IMR-90 (cell line): ENCODE measurements at regions of chr19 and their contacts with region 1.

Region 1: GRCh38 chr19:41439441-41440222 is at the start of gene DMAC2:
- DNase-seq: peak; percentile 97
- ATAC-seq: peak; percentile 99
- H3K4me3 ChIP-seq: peak within 1 kb of the TSS; percentile 82
- H3K27ac ChIP-seq: peak within 1 kb of the TSS; percentile 90
- H3K4me1 ChIP-seq: no peaks in the 10 kb centered on the region; the same call in 1 of the 2 replicates
- H3K27me3 ChIP-seq: no peaks in the 10 kb centered on the region
- CTCF ChIP-seq: peak; percentile 51
- POLR2A ChIP-seq: peak; percentile 76
- RAD21 ChIP-seq: no peak
- total RNA-seq, gene DMAC2: 50.8 and 52.5 TPM in 2 replicates

Region 2: DNA sequence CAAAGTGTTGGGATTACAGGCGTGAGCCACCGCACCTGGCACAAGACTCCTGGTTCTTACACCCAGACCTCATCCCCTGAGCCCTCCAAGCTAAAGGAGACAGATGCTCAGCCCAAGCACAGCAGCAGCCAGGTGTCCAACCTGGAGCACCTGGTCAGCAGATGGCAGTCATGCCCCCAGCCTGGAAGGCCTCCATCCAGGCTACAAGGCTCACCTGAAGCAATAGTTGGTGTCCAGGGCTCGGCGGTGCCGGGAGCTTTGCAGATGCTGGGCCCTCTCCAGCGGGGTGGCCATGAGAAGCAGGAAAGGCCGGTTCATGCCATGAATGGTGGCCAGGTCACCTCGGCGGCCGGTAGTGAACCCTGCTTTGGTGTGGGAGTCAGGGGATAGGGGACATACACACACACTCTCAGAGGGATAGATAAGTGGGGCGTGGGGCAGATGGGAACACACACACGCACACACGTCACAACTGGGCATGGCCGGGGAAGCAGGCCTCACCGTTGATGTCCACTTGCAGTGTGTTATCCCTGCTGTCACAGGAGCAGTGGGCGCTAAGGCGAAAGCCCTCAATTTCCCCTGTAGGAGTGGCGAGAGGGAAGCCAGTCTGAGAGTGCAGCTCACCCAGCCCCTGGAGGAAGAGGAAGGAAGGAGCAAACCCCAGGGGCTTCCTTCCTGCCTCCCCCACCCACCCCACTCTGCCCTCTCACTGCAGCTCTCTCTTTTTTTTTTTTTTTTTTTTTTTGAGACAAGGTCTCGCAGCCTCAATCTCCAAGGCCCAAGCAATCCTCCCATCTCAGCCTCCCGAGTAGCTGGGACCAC is 97.8 kb before region 1 on chr19:
- CTCF ChIA-PET with region 1: no interaction called
- POLR2A ChIA-PET with region 1: no interaction called
- dilution Hi-C with region 1: no loop called
- in situ Hi-C with region 1: no loop called
- intact Hi-C with region 1: no loop called
- DNase-seq: no peak
- ATAC-seq: no peak
- H3K4me3 ChIP-seq: no peak overlapping the region
- H3K27ac ChIP-seq: no peak overlapping the region
- H3K4me1 ChIP-seq: no peaks in the 10 kb centered on the region
- H3K27me3 ChIP-seq: no peaks in the 10 kb centered on the region
- CTCF ChIP-seq: no peak
- POLR2A ChIP-seq: no peak
- RAD21 ChIP-seq: no peak

Region 3: GRCh38 chr19:41570639-41571112 is 131.0 kb after region 1 on chr19:
- CTCF ChIA-PET with region 1: interaction called, 3 read pairs
- POLR2A ChIA-PET with region 1: no interaction called
- dilution Hi-C with region 1: no loop called
- in situ Hi-C with region 1: loop called (anchors 5 kb)
- intact Hi-C with region 1: no loop called
- DNase-seq: peak; percentile 57
- ATAC-seq: peak; percentile 99
- H3K4me3 ChIP-seq: no peak overlapping the region
- H3K27ac ChIP-seq: no peak overlapping the region
- H3K4me1 ChIP-seq: no peaks in the 10 kb centered on the region
- H3K27me3 ChIP-seq: peaks cover 2% of the 10 kb centered on the region; the same call in 1 of the 2 replicates
- CTCF ChIP-seq: peak; percentile 86
- POLR2A ChIP-seq: no peak
- RAD21 ChIP-seq: peak; percentile 79